ENCODE measurements at regions of chr20 and their contacts with region 1.

Region 1: GRCh38 chr20:25294459-25295385 is 46.8 kb downstream of the PYGB start:
- DNase-seq: peak; percentile 77
- H3K4me3 ChIP-seq: no peak overlapping the region
- H3K27ac ChIP-seq: no peak overlapping the region
- H3K4me1 ChIP-seq: peaks cover 14% of the 10 kb centered on the region
- CTCF ChIP-seq: peak; percentile 99

Region 2: DNA sequence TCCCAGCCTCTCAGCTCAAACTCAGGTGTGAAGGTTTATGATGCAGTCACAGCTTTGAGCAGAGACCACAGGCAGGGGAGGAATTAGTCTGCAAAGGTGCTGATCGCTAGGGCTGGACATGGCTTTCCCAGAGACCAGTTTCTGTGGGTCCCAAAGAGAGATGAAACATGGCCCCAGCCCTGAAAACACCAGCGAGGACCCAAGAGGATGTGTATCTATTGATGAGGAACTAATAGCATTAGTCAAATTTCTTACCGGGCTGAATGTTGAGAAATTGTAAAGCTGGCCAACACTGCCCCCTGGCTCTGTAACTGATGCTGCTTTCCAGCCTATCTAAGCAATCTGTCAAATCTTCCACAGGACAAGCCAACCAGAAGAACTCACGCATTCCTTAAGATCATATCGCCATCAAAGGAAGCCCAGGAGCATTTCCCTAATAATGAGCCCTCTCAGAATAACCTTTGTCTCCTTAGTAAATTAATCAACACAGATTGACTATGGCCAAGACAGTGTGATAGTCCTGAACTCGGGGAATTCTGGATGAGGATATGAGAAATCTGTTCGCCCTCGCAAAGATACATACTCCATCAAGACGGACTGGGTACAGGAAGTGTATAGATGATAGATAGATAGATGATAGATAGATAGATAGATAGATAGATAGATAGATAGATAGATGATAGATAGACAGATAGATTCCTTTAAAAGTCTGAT is 228.9 kb before region 1 on chr20:
- CTCF ChIA-PET with region 1: no interaction called
- POLR2A ChIA-PET with region 1: no interaction called
- intact Hi-C with region 1: loop called (anchors 10 kb)
- DNase-seq: peak; percentile 62
- H3K4me3 ChIP-seq: no peak overlapping the region
- H3K27ac ChIP-seq: no peak overlapping the region
- H3K4me1 ChIP-seq: no peaks in the 10 kb centered on the region
- CTCF ChIP-seq: peak; percentile 86

Region 3: GRCh38 chr20:25372584-25373336 is 78.0 kb after region 1 on chr20:
- CTCF ChIA-PET with region 1: no interaction called
- POLR2A ChIA-PET with region 1: no interaction called
- intact Hi-C with region 1: no loop called
- DNase-seq: no peak
- H3K4me3 ChIP-seq: no peak overlapping the region
- H3K27ac ChIP-seq: no peak overlapping the region
- H3K4me1 ChIP-seq: no peaks in the 10 kb centered on the region
- CTCF ChIP-seq: no peak

Region 4: GRCh38 chr20:25399037-25399430 is 104.3 kb after region 1 on chr20:
- CTCF ChIA-PET with region 1: no interaction called
- POLR2A ChIA-PET with region 1: no interaction called
- intact Hi-C with region 1: loop called (anchors 1 kb)
- DNase-seq: peak; percentile 66
- H3K4me3 ChIP-seq: no peak overlapping the region
- H3K27ac ChIP-seq: no peak overlapping the region
- H3K4me1 ChIP-seq: peaks cover 17% of the 10 kb centered on the region
- CTCF ChIP-seq: peak; percentile 78